IMR-90 (cell line): ENCODE measurements at regions of chr3 and their contacts with region 1.

Region 1: GRCh38 chr3:162295323-162295983 is 798.8 kb downstream of the OTOL1 start:
- DNase-seq: peak; percentile 97
- ATAC-seq: peak; percentile 98
- H3K4me3 ChIP-seq: no peak overlapping the region
- H3K27ac ChIP-seq: peak overlapping the region; percentile 52
- H3K4me1 ChIP-seq: peaks cover 4% of the 10 kb centered on the region; the same call in 1 of the 2 replicates
- H3K27me3 ChIP-seq: no peaks in the 10 kb centered on the region
- CTCF ChIP-seq: no peak
- POLR2A ChIP-seq: no peak
- RAD21 ChIP-seq: no peak; the same call in none of the 2 replicates

Region 2: DNA sequence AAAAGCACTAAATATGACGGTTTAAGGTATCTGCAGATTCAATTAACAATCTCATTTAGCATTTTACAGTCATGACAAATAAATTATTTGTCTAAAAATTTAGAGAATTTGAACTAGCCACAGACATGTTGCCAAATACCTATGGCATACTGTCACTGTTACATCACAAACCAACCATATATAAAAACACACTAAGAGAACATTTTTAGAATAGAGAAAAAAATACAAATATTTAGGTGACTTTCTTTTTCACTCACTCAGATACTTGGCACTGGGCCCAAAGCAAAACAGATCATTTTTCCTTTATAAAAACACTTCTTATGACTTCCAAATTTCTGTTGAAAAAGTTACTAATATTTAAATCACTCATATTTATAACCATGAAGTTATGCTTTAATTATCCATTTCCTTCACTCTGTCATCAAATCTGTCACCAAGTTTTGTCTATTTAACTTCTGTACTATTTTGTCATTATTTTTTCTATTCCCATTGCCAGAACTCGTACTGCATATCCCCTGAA is 154.1 kb before region 1 on chr3:
- CTCF ChIA-PET with region 1: no interaction called
- POLR2A ChIA-PET with region 1: no interaction called
- dilution Hi-C with region 1: no loop called
- in situ Hi-C with region 1: no loop called
- intact Hi-C with region 1: loop called (anchors 5 kb)
- DNase-seq: peak; percentile 77
- ATAC-seq: peak; percentile 42
- H3K4me3 ChIP-seq: no peak overlapping the region
- H3K27ac ChIP-seq: no peak overlapping the region
- H3K4me1 ChIP-seq: peaks cover 2% of the 10 kb centered on the region; the same call in 1 of the 2 replicates
- H3K27me3 ChIP-seq: no peaks in the 10 kb centered on the region
- CTCF ChIP-seq: no peak
- POLR2A ChIP-seq: no peak
- RAD21 ChIP-seq: no peak

Region 3: DNA sequence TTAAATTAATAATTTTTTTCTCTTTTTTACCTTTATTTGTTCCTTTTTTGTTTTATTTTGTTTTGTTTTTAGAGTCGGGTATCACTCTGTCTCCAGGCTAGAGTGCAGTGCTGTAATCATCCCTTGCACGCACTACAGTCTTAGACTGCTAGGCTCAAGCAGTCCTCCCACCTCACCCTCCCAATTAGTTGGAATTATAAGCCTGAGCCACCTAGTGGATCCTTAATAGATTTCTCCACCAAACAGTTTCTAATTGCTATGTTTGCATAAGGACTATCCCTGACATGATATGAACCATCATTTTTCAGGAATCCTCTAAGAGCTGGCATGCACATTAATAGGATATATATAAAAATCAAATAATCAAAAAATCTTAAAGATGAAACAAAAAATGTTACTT is 194.4 kb after region 1 on chr3:
- CTCF ChIA-PET with region 1: no interaction called
- POLR2A ChIA-PET with region 1: no interaction called
- dilution Hi-C with region 1: no loop called
- in situ Hi-C with region 1: no loop called
- intact Hi-C with region 1: loop called (anchors 10 kb)
- DNase-seq: no peak
- ATAC-seq: no peak
- H3K4me3 ChIP-seq: no peak overlapping the region
- H3K27ac ChIP-seq: no peak overlapping the region
- H3K4me1 ChIP-seq: peaks cover 4% of the 10 kb centered on the region
- H3K27me3 ChIP-seq: no peaks in the 10 kb centered on the region
- CTCF ChIP-seq: no peak
- POLR2A ChIP-seq: no peak
- RAD21 ChIP-seq: no peak